GM18951 (cell line): ENCODE measurements at regions of chr1 and their contacts with region 1.

Region 1: DNA sequence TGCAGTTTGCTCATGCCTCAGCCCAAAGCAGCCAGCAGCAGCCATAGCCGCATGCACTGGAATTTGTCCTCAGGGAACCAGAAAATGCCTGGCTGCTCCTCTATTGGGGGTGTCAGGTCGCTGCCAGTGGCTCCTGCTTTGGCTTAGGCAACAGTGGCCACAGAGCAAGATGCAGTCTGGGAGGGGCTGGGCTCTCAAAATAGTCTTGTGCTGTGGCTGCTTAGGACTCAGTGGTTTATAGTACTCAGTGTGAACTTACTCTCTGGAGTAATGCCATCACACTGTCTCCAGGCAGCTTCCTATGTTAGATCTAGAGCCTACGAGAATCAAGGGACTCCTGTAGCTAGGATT is 25.1 kb downstream of the CD55 start:
- POLR2A ChIP-seq: no peak

Region 2: GRCh38 chr1:207393610-207394009 is 47.1 kb after region 1 on chr1:
- in situ Hi-C with region 1: loop called (anchors 5 kb)
- POLR2A ChIP-seq: no peak

Region 3: DNA sequence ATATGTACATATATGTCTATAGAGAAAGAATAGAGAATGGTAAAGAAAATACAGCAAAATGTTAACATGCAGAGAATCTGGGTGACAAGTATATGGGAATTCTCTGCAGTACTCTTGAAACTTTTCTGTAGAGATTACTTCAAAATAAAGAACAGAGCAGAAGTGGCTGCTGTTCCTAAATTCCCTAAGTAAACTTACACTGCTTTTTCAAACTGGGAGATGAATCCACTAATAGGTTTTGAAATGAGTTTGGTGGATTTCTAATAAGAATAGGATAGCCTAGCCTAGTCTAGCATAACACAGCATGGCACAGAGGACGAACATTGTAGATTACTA is 107.1 kb after region 1 on chr1:
- in situ Hi-C with region 1: no loop called
- POLR2A ChIP-seq: no peak